Activated naive CD4-positive, alpha-beta T cell treated with anti-CD3 and anti-CD28 coated beads for 36 hours (primary cell): ENCODE measurements at regions of chr10 and their contacts with region 1.

Region 1: DNA sequence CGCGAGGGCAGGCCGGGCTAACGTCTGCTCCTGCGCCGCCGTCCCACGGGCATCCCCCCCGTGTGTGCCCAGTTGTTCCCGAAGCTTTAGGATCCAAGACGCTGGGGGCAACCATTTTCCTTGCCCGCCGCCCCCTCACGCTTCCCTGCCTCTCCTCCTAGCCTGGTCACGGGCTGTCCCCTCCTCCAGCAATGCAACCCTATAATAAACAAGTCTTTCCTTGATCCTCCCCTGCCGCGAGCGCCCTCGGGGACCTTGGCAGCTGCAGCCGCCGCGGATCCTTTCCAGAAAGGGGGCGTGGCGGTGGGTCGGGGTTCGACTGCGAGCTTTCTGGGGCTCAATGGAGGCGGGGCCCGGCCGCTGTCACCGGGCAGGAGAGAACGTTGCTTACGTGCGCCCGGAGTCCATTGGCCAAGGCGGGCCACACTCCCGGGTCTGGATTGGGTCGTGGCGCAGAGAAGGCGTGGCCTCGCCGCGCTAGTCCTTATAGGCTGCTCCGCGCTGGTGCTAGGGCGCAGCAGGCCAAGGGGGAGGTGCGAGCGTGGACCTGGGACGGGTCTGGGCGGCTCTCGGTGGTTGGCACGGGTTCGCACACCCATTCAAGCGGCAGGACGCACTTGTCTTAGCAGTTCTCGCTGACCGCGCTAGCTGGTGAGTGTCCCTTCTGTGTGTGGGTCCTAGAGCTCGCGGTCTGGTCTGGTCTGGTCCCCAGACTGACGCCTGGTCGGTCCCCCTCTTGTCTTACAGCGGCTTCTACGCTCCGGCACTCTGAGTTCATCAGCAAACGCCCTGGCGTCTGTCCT is at the start of gene DDIT4:
- DNase-seq: peak; percentile 99
- H3K4me3 Mint-ChIP-seq: peak within 1 kb of the TSS; percentile 96
- H3K27ac Mint-ChIP-seq: peak within 1 kb of the TSS; percentile 98
- H3K4me1 Mint-ChIP-seq: peaks cover 34% of the 10 kb centered on the region
- H3K27me3 Mint-ChIP-seq: no peaks in the 10 kb centered on the region
- total RNA-seq, gene DDIT4: 684 to 689 TPM

Region 2: DNA sequence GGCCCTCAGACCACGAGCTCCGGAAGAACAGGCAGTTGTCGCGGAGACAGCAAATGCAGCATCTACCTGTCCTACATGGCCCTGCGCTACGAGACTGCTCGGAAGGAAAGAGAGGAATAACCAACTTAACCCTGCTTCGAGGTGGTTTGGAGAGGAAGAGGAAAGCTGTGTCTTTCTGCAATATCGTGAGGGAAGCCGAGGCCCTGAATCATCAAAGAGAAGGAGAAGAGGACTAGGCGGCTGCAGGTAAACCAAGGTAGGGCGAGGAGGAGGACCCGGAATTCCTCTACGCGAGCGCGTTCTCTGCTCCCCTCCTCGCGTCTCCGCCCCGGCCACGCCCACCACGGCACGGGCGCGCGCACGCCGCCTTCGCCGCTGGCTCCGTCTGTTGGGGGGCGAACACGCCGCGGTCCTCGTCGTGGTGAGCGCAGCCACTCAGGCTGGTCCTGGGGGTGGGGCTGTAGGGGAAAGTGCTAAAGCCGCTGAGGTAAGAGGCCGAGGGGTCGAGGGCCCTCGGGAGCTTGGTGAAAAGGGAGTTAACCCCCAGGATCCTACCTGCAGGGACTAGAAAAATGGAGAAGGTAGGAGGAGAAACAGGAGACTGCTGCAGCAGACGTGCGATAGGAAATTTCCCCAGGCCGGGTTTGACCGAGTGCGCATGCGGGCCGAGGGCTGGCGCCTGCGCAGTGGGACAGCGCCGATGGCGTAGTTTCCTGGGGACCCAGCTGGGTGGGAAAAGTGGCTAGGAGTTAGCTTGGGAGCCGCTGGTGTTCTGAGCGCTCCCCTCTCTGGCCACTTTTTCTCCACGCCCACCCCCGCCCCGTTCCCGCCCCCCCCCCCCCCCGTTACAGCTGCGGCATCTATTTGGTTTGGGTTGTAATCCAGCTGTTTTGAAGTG is 57.7 kb before region 1 on chr10 and contains the starts of genes ANAPC16 and ASCC1:
- CTCF ChIA-PET with region 1: interaction called, 5 read pairs
- intact Hi-C with region 1: loop called (anchors 1 kb)
- DNase-seq: peak; percentile 93
- H3K4me3 Mint-ChIP-seq: peak within 1 kb of the TSS; percentile 91
- H3K27ac Mint-ChIP-seq: peak within 1 kb of the TSS; percentile 98
- H3K4me1 Mint-ChIP-seq: peaks cover 67% of the 10 kb centered on the region
- H3K27me3 Mint-ChIP-seq: no peaks in the 10 kb centered on the region
- total RNA-seq, gene ANAPC16: 127 to 128 TPM
- total RNA-seq, gene ASCC1: 61.6 to 68.5 TPM

Region 3: GRCh38 chr10:72248468-72249151 is 25.0 kb before region 1 on chr10:
- CTCF ChIA-PET with region 1: interaction called, 6 read pairs
- intact Hi-C with region 1: loop called (anchors 1 kb)
- DNase-seq: peak; percentile 87
- H3K4me3 Mint-ChIP-seq: peak overlapping the region; percentile 75
- H3K27ac Mint-ChIP-seq: peak overlapping the region; percentile 92
- H3K4me1 Mint-ChIP-seq: peaks cover 78% of the 10 kb centered on the region
- H3K27me3 Mint-ChIP-seq: no peaks in the 10 kb centered on the region

Region 4: GRCh38 chr10:72285972-72286521 is 12.4 kb after region 1 on chr10:
- CTCF ChIA-PET with region 1: interaction called, 26 read pairs
- intact Hi-C with region 1: loop called (anchors 1 kb)
- DNase-seq: peak; percentile 27
- H3K4me3 Mint-ChIP-seq: no peak overlapping the region
- H3K27ac Mint-ChIP-seq: peak overlapping the region; percentile 19
- H3K4me1 Mint-ChIP-seq: peaks cover 33% of the 10 kb centered on the region
- H3K27me3 Mint-ChIP-seq: no peaks in the 10 kb centered on the region

Region 5: DNA sequence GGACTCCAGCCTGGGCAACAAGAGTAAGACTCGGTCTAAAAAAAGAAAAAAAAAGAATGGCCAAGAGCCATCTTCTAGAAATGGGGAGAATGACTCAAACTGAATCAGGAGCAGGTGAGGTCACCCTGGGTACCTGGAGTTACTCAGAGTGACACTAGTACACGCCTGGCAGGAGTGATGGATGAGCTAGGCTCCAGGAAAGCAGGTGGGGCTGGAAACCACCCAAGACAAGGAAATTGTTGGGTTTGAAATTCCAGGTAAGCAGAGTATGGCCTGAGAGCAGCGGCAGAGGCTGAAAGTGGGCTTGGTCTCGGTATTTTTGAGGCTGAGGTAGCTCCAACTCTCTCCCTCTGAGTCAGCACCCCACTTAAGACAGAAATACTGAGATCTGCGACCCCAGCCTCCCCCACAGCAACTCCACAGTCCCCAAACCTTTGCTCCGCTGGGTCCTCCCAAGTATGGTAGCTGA is 18.6 kb after region 1 on chr10:
- CTCF ChIA-PET with region 1: interaction called, 26 read pairs
- intact Hi-C with region 1: loop called (anchors 1 kb)
- DNase-seq: peak; percentile 90
- H3K4me3 Mint-ChIP-seq: peak overlapping the region; percentile 43
- H3K27ac Mint-ChIP-seq: peak overlapping the region; percentile 100
- H3K4me1 Mint-ChIP-seq: peaks cover 59% of the 10 kb centered on the region
- H3K27me3 Mint-ChIP-seq: no peaks in the 10 kb centered on the region

Region 6: GRCh38 chr10:72319416-72320254 is 46.0 kb after region 1 on chr10:
- CTCF ChIA-PET with region 1: interaction called, 9 read pairs
- intact Hi-C with region 1: loop called (anchors 1 kb)
- DNase-seq: peak; percentile 94
- H3K4me3 Mint-ChIP-seq: peak overlapping the region; percentile 86
- H3K27ac Mint-ChIP-seq: peak overlapping the region; percentile 99
- H3K4me1 Mint-ChIP-seq: peaks cover 79% of the 10 kb centered on the region
- H3K27me3 Mint-ChIP-seq: no peaks in the 10 kb centered on the region

Region 7: DNA sequence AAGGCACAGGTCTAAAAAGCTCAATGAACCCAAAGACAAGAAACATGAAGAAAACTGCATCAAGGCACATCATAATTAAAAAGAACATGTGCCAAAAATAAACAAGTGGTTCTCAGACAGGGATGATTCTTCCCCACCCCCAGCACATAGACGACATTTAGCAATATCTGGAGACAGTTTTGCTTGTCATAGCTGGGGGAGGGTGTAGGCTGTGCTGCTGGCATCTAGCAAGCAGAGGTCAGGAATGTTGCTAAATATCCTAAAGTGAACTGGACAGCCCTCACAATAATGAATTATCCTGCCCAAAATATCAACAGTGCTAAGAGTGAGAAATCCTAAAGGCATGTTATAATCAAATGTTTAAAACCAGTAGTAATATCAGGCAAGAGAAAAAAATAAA is 229.6 kb after region 1 on chr10:
- CTCF ChIA-PET with region 1: no interaction called
- intact Hi-C with region 1: no loop called
- DNase-seq: no peak
- H3K4me3 Mint-ChIP-seq: no peak overlapping the region
- H3K27ac Mint-ChIP-seq: no peak overlapping the region
- H3K4me1 Mint-ChIP-seq: peaks cover 5% of the 10 kb centered on the region
- H3K27me3 Mint-ChIP-seq: no peaks in the 10 kb centered on the region

Region 8: GRCh38 chr10:72597897-72598296 is 324.3 kb after region 1 on chr10:
- CTCF ChIA-PET with region 1: no interaction called
- intact Hi-C with region 1: no loop called
- DNase-seq: no peak
- H3K4me3 Mint-ChIP-seq: no peak overlapping the region
- H3K27ac Mint-ChIP-seq: no peak overlapping the region
- H3K4me1 Mint-ChIP-seq: peaks cover 6% of the 10 kb centered on the region
- H3K27me3 Mint-ChIP-seq: no peaks in the 10 kb centered on the region